T-cell (primary cell): ENCODE measurements at regions of chr6 and their contacts with region 1.

Region 1: GRCh38 chr6:26270903-26271667 is 93.9 kb upstream of the BTN3A2 start:
- DNase-seq: peak; percentile 49 to 90 (median 74)
- ATAC-seq: peak; percentile 20 to 35 (median 32)
- H3K4me3 ChIP-seq: peak overlapping the region; percentile 71 to 83
- H3K4me3 Mint-ChIP-seq: no peak overlapping the region
- H3K27ac ChIP-seq: peak overlapping the region; percentile 89
- H3K27ac Mint-ChIP-seq: peak overlapping the region in 1 of 2 donors; percentile 58
- H3K4me1 ChIP-seq: peaks cover 18 to 31% of the 10 kb centered on the region in 2 experiments
- H3K4me1 Mint-ChIP-seq: peaks cover 20 to 29% (median 21%) of the 10 kb centered on the region in 3 donors
- H3K27me3 ChIP-seq: no peaks in the 10 kb centered on the region
- H3K27me3 Mint-ChIP-seq: no peaks in the 10 kb centered on the region

Region 2: GRCh38 chr6:26183581-26184366 is 87.3 kb before region 1 on chr6:
- CTCF ChIA-PET with region 1: interaction called in 1 of 2 experiments, 8 read pairs
- POLR2A ChIA-PET with region 1: interaction called, 6 to 16 read pairs
- DNase-seq: peak in 25 of 35 experiments; percentile 20 to 85 (median 42)
- ATAC-seq: peak; percentile 87 to 91 (median 89)
- H3K4me3 ChIP-seq: peak overlapping the region; percentile 57 to 83
- H3K4me3 Mint-ChIP-seq: peak overlapping the region; percentile 88 to 96 (median 93)
- H3K27ac ChIP-seq: peak overlapping the region; percentile 76
- H3K27ac Mint-ChIP-seq: peak overlapping the region; percentile 94 to 98
- H3K4me1 ChIP-seq: peaks cover 12 to 30% of the 10 kb centered on the region in 2 experiments
- H3K4me1 Mint-ChIP-seq: peaks cover 42 to 48% (median 46%) of the 10 kb centered on the region in 3 donors
- H3K27me3 ChIP-seq: no peaks in the 10 kb centered on the region
- H3K27me3 Mint-ChIP-seq: no peaks in the 10 kb centered on the region

Region 3: GRCh38 chr6:26223650-26224546 is 47.2 kb before region 1 on chr6:
- CTCF ChIA-PET with region 1: interaction called in 1 of 2 experiments, 5 read pairs
- POLR2A ChIA-PET with region 1: interaction called in 1 of 2 experiments, 15 read pairs
- DNase-seq: peak in 34 of 35 experiments; percentile 36 to 84 (median 58)
- ATAC-seq: peak; percentile 87 to 90 (median 89)
- H3K4me3 ChIP-seq: peak overlapping the region; percentile 58 to 92
- H3K4me3 Mint-ChIP-seq: no peak overlapping the region
- H3K27ac ChIP-seq: peak overlapping the region; percentile 95
- H3K27ac Mint-ChIP-seq: no peak overlapping the region
- H3K4me1 ChIP-seq: peaks cover 10 to 13% of the 10 kb centered on the region in 2 experiments
- H3K4me1 Mint-ChIP-seq: peaks cover 5 to 14% (median 14%) of the 10 kb centered on the region in 3 donors
- H3K27me3 ChIP-seq: no peaks in the 10 kb centered on the region
- H3K27me3 Mint-ChIP-seq: no peaks in the 10 kb centered on the region

Region 4: DNA sequence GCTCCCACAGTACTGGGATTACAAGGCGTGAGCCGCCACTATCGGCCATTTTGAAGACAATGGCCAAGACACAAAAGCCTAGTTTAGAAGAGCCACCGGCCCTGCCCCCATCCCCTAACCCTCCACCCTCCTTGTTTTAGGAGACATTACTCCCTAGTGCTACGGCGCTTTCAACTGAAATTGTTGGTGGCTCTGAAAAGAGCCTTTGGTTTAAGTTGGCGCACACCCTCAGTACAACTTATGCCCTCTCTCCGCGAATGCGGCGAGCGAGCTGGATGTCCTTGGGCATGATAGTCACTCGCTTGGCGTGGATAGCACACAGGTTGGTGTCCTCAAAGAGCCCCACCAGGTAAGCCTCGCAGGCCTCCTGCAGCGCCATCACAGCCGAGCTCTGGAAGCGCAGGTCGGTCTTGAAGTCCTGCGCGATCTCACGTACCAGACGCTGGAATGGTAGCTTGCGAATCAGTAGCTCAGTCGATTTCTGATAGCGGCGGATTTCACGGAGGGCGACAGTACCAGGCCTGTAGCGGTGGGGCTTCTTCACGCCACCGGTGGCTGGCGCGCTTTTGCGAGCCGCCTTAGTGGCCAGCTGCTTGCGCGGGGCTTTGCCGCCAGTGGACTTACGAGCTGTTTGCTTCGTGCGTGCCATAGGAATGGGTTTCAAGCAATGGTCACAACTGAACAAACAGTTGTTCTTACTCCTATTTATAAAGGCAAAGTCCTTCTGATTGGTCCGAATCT is 21.0 kb before region 1 on chr6:
- CTCF ChIA-PET with region 1: interaction called in 1 of 2 experiments, 3 read pairs
- POLR2A ChIA-PET with region 1: interaction called, 9 to 10 read pairs
- DNase-seq: peak; percentile 58 to 87 (median 79)
- ATAC-seq: peak; percentile 71 to 76 (median 76)
- H3K4me3 ChIP-seq: peak overlapping the region; percentile 74 to 97
- H3K4me3 Mint-ChIP-seq: peak overlapping the region; percentile 93 to 98 (median 93)
- H3K27ac ChIP-seq: peak overlapping the region; percentile 83
- H3K27ac Mint-ChIP-seq: peak overlapping the region; percentile 88 to 93
- H3K4me1 ChIP-seq: peaks cover 12 to 24% of the 10 kb centered on the region in 2 experiments
- H3K4me1 Mint-ChIP-seq: peaks cover 29 to 47% (median 42%) of the 10 kb centered on the region in 3 donors
- H3K27me3 ChIP-seq: no peaks in the 10 kb centered on the region
- H3K27me3 Mint-ChIP-seq: no peaks in the 10 kb centered on the region

Region 5: DNA sequence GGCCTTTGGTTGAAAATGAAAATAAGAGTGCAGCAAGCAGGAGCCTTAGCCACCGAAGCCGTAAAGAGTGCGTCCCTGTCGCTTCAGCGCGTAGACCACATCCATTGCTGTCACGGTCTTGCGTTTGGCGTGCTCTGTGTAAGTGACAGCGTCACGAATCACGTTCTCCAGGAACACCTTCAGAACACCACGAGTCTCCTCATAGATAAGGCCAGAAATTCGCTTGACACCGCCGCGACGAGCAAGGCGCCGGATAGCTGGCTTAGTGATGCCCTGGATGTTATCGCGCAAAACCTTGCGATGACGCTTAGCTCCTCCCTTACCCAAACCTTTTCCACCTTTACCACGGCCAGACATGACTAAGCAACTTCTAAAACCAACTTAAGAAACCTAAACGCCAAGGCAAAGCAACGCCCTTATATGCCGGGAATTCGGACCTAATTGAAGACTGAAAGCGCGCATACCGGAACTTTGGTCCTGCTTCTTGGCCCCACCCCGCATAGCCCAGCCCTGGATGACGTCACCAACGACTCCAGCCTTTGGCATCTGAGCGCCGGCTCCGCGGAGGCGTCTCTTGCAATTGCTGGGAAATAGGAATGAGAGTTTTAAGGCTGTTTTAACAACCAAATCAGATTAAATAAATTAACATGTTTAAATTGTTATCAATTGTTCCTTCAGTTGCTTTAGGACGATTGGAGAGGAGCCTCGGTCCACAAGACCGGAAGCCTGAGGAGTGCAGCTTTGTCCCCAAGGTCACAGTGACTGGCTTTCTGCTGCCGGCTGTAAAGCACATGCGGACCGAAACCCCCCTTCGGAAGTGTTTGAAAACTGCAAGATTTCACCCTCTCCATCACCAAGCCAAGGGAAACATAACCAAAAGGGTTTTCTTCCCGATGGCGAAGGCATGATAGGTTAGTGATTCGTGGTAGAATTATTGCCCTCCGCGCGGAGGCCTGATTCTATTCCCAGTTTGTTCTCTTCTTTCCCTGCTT is 14.4 kb after region 1 on chr6:
- CTCF ChIA-PET with region 1: interaction called in 1 of 2 experiments, 25 read pairs
- POLR2A ChIA-PET with region 1: interaction called, 14 to 57 read pairs
- DNase-seq: peak; percentile 86 to 97 (median 91)
- ATAC-seq: peak; percentile 77 to 87 (median 80)
- H3K4me3 ChIP-seq: peak overlapping the region; percentile 50 to 84
- H3K4me3 Mint-ChIP-seq: peak overlapping the region; percentile 84 to 92 (median 88)
- H3K27ac ChIP-seq: peak overlapping the region; percentile 81
- H3K27ac Mint-ChIP-seq: peak overlapping the region; percentile 92 to 93
- H3K4me1 ChIP-seq: peaks cover 14 to 19% of the 10 kb centered on the region in 2 experiments
- H3K4me1 Mint-ChIP-seq: peaks cover 30 to 41% (median 31%) of the 10 kb centered on the region in 3 donors
- H3K27me3 ChIP-seq: no peaks in the 10 kb centered on the region
- H3K27me3 Mint-ChIP-seq: peaks cover 4 to 5% of the 10 kb centered on the region in 2 donors

Region 6: GRCh38 chr6:26351544-26351953 is 80.5 kb after region 1 on chr6:
- CTCF ChIA-PET with region 1: no interaction called
- POLR2A ChIA-PET with region 1: no interaction called
- DNase-seq: no peak
- ATAC-seq: no peak
- H3K4me3 ChIP-seq: no peak overlapping the region
- H3K4me3 Mint-ChIP-seq: no peak overlapping the region
- H3K27ac ChIP-seq: no peak overlapping the region
- H3K27ac Mint-ChIP-seq: no peak overlapping the region
- H3K4me1 ChIP-seq: no peaks in the 10 kb centered on the region
- H3K4me1 Mint-ChIP-seq: no peaks in the 10 kb centered on the region
- H3K27me3 ChIP-seq: no peaks in the 10 kb centered on the region
- H3K27me3 Mint-ChIP-seq: no peaks in the 10 kb centered on the region

Region 7: DNA sequence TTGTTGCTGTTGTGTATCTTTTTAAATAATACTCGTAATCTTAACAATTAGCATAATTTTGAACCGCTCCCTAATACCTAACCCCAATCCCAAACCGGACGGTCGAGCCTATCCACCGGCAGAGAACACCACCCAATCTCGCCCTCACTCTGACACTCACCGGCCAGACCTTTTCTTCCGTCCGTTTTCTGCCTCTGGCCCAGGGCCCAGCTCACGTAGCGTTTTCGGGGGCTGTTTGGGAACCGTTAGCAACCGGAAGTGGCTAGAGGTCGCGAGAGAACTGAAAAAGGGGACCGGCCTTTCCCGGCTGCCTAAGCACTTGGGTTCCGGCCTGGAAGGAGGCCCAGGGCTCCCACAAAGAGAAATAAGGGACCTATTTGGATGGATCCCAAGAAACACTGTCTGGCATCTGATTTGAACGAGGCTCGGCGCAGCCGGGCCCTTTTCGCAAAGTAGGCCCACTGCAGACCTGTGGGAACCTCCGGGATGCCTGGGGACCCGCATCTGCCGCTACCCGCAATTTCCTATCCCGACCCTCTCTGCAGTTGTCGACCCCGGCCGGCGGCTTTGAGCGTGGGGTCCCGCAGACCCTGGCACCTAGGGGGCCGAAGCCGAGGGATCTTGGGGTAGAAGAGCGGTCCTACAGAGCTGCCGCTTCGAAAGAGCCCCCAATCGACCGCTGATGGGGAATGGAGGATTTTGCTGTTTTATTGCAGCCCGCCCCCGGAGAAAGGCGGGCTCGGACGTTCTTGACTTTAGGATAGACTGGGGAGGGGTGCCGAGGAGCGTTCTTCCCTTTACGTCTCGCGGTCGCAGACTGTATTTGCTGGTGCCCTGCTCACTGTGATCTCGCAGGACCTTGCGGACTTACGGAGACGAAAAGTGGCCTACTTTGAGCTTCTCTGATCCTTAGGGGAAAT is 1865.8 kb after region 1 on chr6:
- CTCF ChIA-PET with region 1: interaction called in 1 of 2 experiments, 10 read pairs
- POLR2A ChIA-PET with region 1: interaction called in 1 of 2 experiments, 6 read pairs
- DNase-seq: peak; percentile 44 to 85 (median 66)
- ATAC-seq: peak; percentile 40 to 63 (median 54)
- H3K4me3 ChIP-seq: peak overlapping the region; percentile 76 to 92
- H3K4me3 Mint-ChIP-seq: peak overlapping the region; percentile 91 to 95 (median 91)
- H3K27ac ChIP-seq: peak overlapping the region; percentile 96
- H3K27ac Mint-ChIP-seq: peak overlapping the region; percentile 94 to 97
- H3K4me1 ChIP-seq: peaks cover 14 to 24% of the 10 kb centered on the region in 2 experiments
- H3K4me1 Mint-ChIP-seq: peaks cover 76 to 82% (median 81%) of the 10 kb centered on the region in 3 donors
- H3K27me3 ChIP-seq: no peaks in the 10 kb centered on the region
- H3K27me3 Mint-ChIP-seq: no peaks in the 10 kb centered on the region